Psoas muscle (tissue), 8 donors: ENCODE measurements at regions of chr17 and their contacts with region 1.

Region 1: GRCh38 chr17:56558088-56558487 is 35.4 kb upstream of the NOG start:
- DNase-seq: no peak
- ATAC-seq: no peak
- H3K4me3 ChIP-seq: no peak overlapping the region
- H3K27ac ChIP-seq: no peak overlapping the region
- H3K4me1 ChIP-seq: no peaks in the 10 kb centered on the region
- H3K27me3 ChIP-seq: no peaks in the 10 kb centered on the region
- CTCF ChIP-seq: no peak

Region 2: DNA sequence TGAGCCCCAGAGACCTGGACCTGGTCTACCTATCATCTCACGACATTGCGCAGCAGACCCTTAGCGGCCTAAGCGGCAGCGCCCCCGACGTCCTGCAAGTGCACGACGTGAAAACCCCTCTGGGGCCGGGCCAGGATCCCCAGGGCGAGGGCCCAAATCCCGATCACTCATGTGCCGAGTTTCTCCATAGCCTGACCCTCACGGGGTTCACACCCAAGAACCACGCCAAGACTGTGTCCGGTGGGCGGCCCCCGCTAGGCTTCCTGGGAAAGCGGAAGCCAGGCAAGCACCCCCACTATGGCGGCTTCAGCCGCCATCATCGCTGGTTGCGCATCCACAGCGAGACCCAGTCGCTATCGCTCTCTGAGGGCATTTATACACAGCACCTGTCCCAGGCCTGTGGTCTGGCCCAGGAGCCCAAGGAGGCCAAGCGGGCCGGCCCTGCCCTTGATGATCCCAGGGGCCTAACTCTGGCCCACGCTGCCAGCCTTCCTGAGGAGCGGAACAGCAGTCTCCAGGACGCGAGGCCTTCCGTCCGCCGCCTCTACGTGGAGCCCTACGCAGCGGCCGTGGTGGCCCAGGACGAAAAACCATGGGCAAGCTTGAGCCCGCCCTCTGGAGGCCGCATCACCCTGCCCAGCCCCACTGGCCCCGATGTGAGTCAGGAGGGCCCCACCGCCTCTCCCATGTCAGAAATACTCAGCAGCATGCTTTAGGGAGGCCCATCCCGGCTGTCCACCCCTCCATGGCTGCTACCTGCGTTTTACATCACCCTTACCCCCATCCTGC is 47.3 kb before region 1 on chr17:
- intact Hi-C with region 1: no loop called
- DNase-seq: peak in 1 of 2 donors; percentile 44
- ATAC-seq: no peak
- H3K4me3 ChIP-seq: no peak overlapping the region
- H3K27ac ChIP-seq: no peak overlapping the region
- H3K4me1 ChIP-seq: no peaks in the 10 kb centered on the region
- H3K27me3 ChIP-seq: no peaks in the 10 kb centered on the region
- CTCF ChIP-seq: no peak

Region 3: DNA sequence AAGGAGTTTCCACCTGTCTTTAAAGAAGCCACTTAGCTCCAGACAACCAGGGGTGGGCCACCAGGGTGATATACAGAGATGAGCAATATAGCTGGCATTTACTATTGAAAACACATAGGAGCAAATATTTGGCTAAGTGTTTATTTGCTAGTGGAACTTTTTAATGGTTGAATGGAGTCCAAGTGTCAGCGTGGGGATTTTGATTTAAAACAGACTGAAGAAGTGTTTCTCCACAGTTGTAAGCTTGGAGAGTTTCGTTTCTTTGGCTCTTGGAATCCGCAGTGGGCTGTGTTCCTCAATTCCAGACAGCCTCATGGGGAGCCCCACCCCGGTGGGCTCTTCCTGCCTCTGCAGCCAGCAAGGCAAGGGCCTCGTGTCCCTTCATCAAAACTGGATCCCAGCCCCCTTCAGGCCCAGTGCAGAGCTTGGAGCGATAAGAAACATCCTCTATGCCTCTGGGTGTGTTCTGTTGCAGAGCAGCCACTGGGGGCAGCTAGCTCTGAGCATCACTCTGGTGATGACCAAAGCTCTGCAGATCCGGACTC is 71.5 kb after region 1 on chr17:
- intact Hi-C with region 1: loop called in 1 of 2 experiments (anchors 10 kb)
- DNase-seq: no peak
- ATAC-seq: no peak
- H3K4me3 ChIP-seq: no peak overlapping the region
- H3K27ac ChIP-seq: no peak overlapping the region
- H3K4me1 ChIP-seq: no peaks in the 10 kb centered on the region
- H3K27me3 ChIP-seq: peaks cover 0 to 2% (median 0%) of the 10 kb centered on the region in 3 donors
- CTCF ChIP-seq: no peak